CD8-positive, alpha-beta T cell (primary cell): ENCODE measurements at regions of chr19 and their contacts with region 1.

Region 1: DNA sequence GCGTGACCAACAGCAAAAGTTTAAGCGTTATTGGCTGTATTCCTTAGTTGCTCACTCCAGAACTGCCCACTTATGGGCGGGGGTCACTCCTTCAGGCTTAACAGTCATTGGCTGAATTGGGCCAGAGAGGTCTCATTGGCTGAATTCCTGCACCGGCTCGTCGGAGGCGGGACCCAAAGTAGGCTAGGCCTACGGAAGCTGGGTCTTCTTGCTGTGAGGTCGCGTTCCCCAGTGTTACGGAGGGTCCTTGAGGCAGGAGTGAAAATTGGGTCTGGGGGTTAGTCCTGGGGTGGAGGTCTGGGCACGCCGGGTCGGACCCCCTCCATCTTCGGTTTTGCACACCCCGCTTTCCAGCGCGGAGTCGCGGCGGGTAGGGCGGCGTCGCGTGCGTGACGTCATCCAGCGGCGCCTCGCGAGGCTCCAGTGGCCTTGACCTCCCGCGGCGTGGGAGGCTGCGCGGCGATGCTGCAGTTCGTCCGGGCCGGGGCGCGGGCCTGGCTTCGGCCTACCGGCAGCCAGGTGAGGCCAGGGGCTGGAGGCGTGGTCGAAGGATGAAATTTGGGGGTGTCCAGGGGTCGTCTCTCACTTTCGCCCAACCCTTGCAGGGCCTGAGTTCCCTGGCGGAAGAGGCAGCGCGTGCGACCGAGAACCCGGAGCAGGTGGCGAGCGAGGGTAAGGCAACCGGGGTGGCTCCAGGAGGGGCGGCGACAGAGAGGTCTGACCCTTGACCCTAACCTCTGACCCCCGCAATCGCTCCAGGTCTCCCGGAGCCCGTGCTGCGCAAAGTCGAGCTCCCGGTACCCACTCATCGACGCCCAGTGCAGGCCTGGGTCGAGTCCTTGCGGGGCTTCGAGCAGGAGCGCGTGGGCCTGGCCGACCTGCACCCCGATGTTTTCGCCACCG is at the start of gene MRPL4:
- DNase-seq: peak; percentile 90 to 99 (median 94)
- ATAC-seq: peak; percentile 97
- H3K4me3 ChIP-seq: peak within 1 kb of the TSS; percentile 92 to 99
- H3K4me3 Mint-ChIP-seq: peak within 1 kb of the TSS; percentile 99
- H3K27ac ChIP-seq: peak within 1 kb of the TSS; percentile 68 to 80
- H3K27ac Mint-ChIP-seq: peak within 1 kb of the TSS; percentile 97
- H3K4me1 ChIP-seq: peaks cover 7% of the 10 kb centered on the region
- H3K4me1 Mint-ChIP-seq: peaks cover 24% of the 10 kb centered on the region
- H3K27me3 ChIP-seq: no peaks in the 10 kb centered on the region
- H3K27me3 Mint-ChIP-seq: no peaks in the 10 kb centered on the region
- CTCF ChIP-seq: no peak
- total RNA-seq, gene MRPL4: 39.5 to 46.0 TPM

Region 2: GRCh38 chr19:10027158-10027693 is 224.8 kb before region 1 on chr19:
- CTCF ChIA-PET with region 1: no interaction called
- POLR2A ChIA-PET with region 1: no interaction called
- intact Hi-C with region 1: loop called in 1 of 2 experiments (anchors 2 kb)
- DNase-seq: no peak
- ATAC-seq: no peak
- H3K4me3 ChIP-seq: no peak overlapping the region
- H3K4me3 Mint-ChIP-seq: no peak overlapping the region
- H3K27ac ChIP-seq: no peak overlapping the region
- H3K27ac Mint-ChIP-seq: no peak overlapping the region
- H3K4me1 ChIP-seq: peaks cover 8% of the 10 kb centered on the region
- H3K4me1 Mint-ChIP-seq: peaks cover 7% of the 10 kb centered on the region
- H3K27me3 ChIP-seq: peaks cover 3 to 5% of the 10 kb centered on the region in 2 experiments
- H3K27me3 Mint-ChIP-seq: peaks cover 18% of the 10 kb centered on the region
- CTCF ChIP-seq: no peak

Region 3: DNA sequence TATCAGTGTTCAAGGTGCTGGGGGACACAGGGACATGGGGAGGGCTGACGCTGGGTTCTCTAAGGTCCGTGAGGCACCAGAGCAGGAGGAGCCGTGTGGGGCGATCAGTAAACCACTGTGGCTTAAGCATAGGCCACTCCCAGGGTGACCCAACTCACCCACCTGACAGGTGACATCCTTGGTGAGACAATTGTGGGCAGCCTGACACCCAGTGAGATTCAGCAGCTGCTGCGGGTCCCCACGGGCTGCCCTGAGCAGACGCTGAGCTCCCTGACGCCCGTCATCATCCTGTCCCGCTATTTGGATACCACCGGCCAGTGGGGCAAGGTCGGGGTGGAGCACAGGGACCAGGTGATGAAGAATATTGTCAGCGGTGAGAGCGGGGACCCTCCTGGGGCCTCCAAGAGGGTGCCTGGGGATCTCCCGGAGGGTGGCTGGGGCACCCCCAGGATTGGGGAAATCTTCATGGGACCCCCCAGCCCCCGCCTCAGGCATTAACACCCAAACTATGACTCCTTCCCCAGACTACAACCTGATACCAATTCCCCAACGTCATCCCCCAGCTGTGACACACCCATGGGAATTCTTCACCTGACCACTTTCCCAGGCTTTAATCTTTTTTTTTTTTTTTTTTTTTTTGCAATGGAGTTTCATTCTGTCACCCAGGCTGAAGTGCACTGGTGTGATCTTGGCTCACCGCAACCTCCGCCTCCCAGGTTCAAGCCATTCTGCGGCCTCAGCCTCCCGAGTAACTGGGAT is 199.3 kb before region 1 on chr19:
- CTCF ChIA-PET with region 1: no interaction called
- POLR2A ChIA-PET with region 1: no interaction called
- intact Hi-C with region 1: no loop called
- DNase-seq: no peak
- ATAC-seq: no peak
- H3K4me3 ChIP-seq: no peak overlapping the region
- H3K4me3 Mint-ChIP-seq: no peak overlapping the region
- H3K27ac ChIP-seq: no peak overlapping the region
- H3K27ac Mint-ChIP-seq: no peak overlapping the region
- H3K4me1 ChIP-seq: no peaks in the 10 kb centered on the region
- H3K4me1 Mint-ChIP-seq: no peaks in the 10 kb centered on the region
- H3K27me3 ChIP-seq: no peaks in the 10 kb centered on the region
- H3K27me3 Mint-ChIP-seq: peaks cover 6% of the 10 kb centered on the region
- CTCF ChIP-seq: no peak

Region 4: DNA sequence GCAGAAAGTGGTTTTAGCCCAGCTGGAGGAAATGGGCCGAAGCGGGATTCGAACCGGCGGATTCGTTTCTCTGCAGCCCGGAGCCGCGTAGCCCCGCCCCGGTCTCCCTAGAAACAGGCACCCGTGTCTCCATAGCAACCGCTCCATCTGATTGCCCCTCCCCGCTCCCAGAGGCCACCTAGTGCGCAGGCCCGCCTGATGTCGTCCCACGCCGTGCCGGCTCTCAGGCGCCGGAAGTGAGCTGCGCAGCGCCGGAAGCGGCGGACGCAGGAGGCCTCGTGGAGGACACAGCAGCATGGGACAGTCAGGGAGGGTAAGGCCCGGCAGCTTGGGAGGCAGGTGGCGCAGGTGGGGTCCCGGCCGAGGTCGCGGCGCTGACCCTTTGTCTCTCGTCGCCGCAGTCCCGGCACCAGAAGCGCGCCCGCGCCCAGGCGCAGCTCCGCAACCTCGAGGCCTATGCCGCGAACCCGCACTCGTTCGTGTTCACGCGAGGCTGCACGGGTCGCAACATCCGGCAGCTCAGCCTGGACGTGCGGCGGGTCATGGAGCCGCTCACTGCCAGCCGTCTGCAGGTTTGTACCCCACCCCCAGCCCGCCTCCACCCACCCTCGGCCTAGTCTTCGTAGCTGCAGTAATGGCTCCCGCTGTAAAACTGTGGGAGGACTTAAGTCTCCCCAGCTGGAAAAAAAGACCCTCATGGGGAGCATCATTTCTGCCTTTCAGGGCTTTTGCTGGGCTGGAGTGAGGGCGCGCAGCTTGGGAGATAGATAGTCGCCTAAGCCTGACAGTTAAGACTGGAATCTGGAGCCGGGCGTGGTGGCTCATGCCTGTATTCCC is 145.7 kb before region 1 on chr19 and contains the start of gene PPAN:
- CTCF ChIA-PET with region 1: interaction called, 14 read pairs
- POLR2A ChIA-PET with region 1: interaction called, 6 read pairs
- intact Hi-C with region 1: no loop called
- DNase-seq: peak; percentile 95 to 99 (median 98)
- ATAC-seq: peak; percentile 63
- H3K4me3 ChIP-seq: peak within 1 kb of the TSS; percentile 53 to 74
- H3K4me3 Mint-ChIP-seq: peak within 1 kb of the TSS; percentile 89
- H3K27ac ChIP-seq: peak within 1 kb of the TSS; percentile 91 to 93
- H3K27ac Mint-ChIP-seq: peak within 1 kb of the TSS; percentile 93
- H3K4me1 ChIP-seq: peaks cover 61% of the 10 kb centered on the region
- H3K4me1 Mint-ChIP-seq: peaks cover 57% of the 10 kb centered on the region
- H3K27me3 ChIP-seq: no peaks in the 10 kb centered on the region
- H3K27me3 Mint-ChIP-seq: no peaks in the 10 kb centered on the region
- CTCF ChIP-seq: no peak
- total RNA-seq, gene PPAN: 97.6 to 114 TPM

Region 5: DNA sequence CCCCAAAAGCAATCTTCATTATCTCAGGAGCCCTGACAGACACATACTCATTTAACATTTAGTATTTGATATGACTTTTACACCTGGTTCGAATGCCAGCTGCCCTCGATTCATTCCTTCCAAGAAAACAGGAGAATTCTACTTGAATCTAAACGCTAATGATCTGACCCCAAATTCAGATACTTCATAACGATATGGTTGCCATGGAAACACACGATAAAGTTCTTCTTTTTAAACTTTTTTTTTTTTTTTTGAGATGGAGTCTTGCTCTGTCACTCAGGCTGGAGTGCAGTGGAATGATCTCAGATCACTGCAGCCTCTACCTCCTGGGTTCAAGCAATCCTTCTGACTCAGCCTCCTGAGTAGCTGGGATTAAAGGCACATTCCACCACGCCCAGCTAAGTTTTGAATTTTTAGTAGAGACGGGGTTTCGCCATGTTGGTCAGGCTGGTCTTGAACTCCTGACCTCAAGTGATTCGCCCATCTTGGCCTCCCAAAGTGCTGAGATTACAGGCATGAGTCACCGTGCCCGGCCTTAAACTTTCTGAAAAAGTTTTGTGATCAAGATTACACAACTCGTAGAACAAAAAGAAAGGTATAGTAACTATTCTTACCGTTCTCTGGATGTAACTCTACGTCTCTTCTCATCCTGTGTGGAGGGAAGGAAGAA is 78.7 kb before region 1 on chr19:
- CTCF ChIA-PET with region 1: interaction called, 7 read pairs
- POLR2A ChIA-PET with region 1: no interaction called
- intact Hi-C with region 1: loop called in 1 of 2 experiments (anchors 5 kb)
- DNase-seq: no peak
- ATAC-seq: no peak
- H3K4me3 ChIP-seq: no peak overlapping the region
- H3K4me3 Mint-ChIP-seq: no peak overlapping the region
- H3K27ac ChIP-seq: no peak overlapping the region
- H3K27ac Mint-ChIP-seq: no peak overlapping the region
- H3K4me1 ChIP-seq: no peaks in the 10 kb centered on the region
- H3K4me1 Mint-ChIP-seq: peaks cover 2% of the 10 kb centered on the region
- H3K27me3 ChIP-seq: no peaks in the 10 kb centered on the region
- H3K27me3 Mint-ChIP-seq: no peaks in the 10 kb centered on the region
- CTCF ChIP-seq: no peak

Region 6: DNA sequence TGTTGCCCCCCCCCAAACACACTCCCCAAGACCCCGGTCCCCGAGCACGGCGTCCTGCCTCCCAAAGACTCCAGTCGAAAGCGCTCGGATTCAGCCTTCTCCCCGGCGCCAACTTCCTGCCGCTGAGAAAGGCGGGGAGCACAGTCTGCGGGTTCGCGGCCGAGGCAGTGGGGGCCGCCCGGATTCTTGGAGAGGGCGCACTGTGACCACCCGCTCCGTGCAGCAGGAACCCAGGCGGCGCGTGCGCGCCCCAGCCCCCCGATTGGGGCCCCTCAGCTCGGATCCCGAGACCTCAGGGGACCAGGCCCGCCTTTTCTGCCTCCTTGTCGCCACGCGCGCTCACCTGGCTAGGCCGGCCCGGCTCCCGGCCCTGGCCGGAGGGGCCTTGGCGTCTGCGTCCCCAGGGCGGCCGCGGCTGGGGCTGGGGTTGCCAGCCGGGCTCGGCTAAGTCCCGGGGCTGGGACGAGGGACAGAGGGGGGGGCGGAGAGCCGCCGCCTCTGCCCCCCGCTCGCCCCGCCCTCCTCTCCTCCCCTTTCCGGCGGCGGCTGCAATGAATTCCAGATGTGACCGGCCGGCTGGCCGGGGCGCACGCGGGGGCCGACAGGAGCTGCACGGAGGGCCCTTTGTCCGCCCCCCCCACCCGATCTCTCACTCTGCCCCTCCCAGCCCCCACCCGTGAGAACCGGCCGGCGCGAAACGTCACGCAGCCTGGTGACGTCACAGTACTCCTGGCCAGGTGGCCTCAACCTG is 21.0 kb before region 1 on chr19 and contains the start of gene S1PR2:
- CTCF ChIA-PET with region 1: interaction called, 76 read pairs
- POLR2A ChIA-PET with region 1: interaction called, 5 read pairs
- intact Hi-C with region 1: loop called (anchors 1 kb)
- DNase-seq: peak; percentile 47 to 88 (median 68)
- ATAC-seq: peak; percentile 48
- H3K4me3 ChIP-seq: peak within 1 kb of the TSS; percentile 84 to 90
- H3K4me3 Mint-ChIP-seq: peak within 1 kb of the TSS; percentile 86
- H3K27ac ChIP-seq: peak within 1 kb of the TSS; percentile 67 to 84
- H3K27ac Mint-ChIP-seq: peak within 1 kb of the TSS; percentile 86
- H3K4me1 ChIP-seq: peaks cover 20% of the 10 kb centered on the region
- H3K4me1 Mint-ChIP-seq: peaks cover 24% of the 10 kb centered on the region
- H3K27me3 ChIP-seq: no peaks in the 10 kb centered on the region
- H3K27me3 Mint-ChIP-seq: no peaks in the 10 kb centered on the region
- CTCF ChIP-seq: no peak
- total RNA-seq, gene S1PR2: 13.3 to 14.8 TPM

Region 7: GRCh38 chr19:10422046-10422461 is 170.0 kb after region 1 on chr19:
- CTCF ChIA-PET with region 1: no interaction called
- POLR2A ChIA-PET with region 1: no interaction called
- intact Hi-C with region 1: no loop called
- DNase-seq: peak in 1 of 9 experiments; percentile 12
- ATAC-seq: no peak
- H3K4me3 ChIP-seq: no peak overlapping the region
- H3K4me3 Mint-ChIP-seq: peak overlapping the region; percentile 67
- H3K27ac ChIP-seq: no peak overlapping the region
- H3K27ac Mint-ChIP-seq: no peak overlapping the region
- H3K4me1 ChIP-seq: peaks cover 64% of the 10 kb centered on the region
- H3K4me1 Mint-ChIP-seq: peaks cover 54% of the 10 kb centered on the region
- H3K27me3 ChIP-seq: peaks cover 41 to 42% of the 10 kb centered on the region in 2 experiments
- H3K27me3 Mint-ChIP-seq: peaks cover 43% of the 10 kb centered on the region
- CTCF ChIP-seq: no peak